PC-9 (cell line): ENCODE measurements at regions of chr15 and their contacts with region 1.

Region 1: GRCh38 chr15:52031566-52031965 is 12.5 kb downstream of the MAPK6 start:
- DNase-seq: peak; percentile 55 to 59
- H3K4me3 ChIP-seq: no peak overlapping the region
- H3K27ac ChIP-seq: 0 out of 2 replicates have a peak overlapping the region, but pooled peaks have one; percentile 39
- H3K4me1 ChIP-seq: peaks cover 10% of the 10 kb centered on the region; the same call in 1 of the 2 replicates
- H3K27me3 ChIP-seq: no peaks in the 10 kb centered on the region
- CTCF ChIP-seq: no peak

Region 2: DNA sequence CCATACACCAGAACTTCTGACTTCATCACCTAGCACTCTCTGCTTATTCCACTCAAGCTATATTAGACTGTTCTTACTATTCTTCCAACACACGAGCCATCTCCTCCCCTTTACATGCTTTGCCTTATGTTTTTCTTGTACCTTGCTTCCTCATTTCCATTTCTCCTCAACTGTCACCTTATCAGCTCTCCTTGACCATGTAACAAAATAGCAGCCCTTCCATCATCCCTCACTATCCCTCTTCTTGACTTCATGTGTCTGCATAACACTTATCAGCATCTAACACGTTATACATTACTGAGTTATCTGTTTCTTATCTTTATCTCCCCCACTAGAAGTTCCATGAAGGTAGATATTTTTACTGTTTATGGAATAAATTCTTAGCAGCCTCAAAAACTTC is 1390.3 kb before region 1 on chr15:
- CTCF ChIA-PET with region 1: no interaction called
- POLR2A ChIA-PET with region 1: interaction called, 10 read pairs
- intact Hi-C with region 1: no loop called
- DNase-seq: no peak
- H3K4me3 ChIP-seq: no peak overlapping the region
- H3K27ac ChIP-seq: no peak overlapping the region
- H3K4me1 ChIP-seq: no peaks in the 10 kb centered on the region
- H3K27me3 ChIP-seq: no peaks in the 10 kb centered on the region
- CTCF ChIP-seq: no peak

Region 3: DNA sequence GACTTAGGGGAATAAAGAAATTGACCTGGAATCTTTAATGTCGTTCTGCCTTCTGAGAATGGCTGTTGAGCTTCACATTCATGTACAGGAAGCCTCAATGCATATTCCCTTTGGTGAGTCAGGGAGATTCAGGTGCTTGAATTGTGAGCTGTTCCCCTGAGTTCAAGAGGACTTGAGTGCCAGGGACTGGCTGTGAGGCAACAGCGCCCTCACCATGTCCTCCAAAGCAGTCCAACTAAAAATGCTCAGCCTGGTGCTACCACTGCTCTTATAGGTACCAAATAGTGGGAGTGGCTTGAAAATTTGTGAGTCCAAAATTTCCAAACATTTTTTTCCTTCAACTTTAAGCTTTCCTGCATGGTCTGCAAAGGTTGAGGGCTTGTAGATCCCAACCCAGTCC is 114.1 kb before region 1 on chr15:
- CTCF ChIA-PET with region 1: no interaction called
- POLR2A ChIA-PET with region 1: no interaction called
- intact Hi-C with region 1: no loop called
- DNase-seq: peak; percentile 36 to 58
- H3K4me3 ChIP-seq: no peak overlapping the region
- H3K27ac ChIP-seq: no peak overlapping the region
- H3K4me1 ChIP-seq: no peaks in the 10 kb centered on the region
- H3K27me3 ChIP-seq: no peaks in the 10 kb centered on the region
- CTCF ChIP-seq: peak; percentile 50; the same call in 1 of the 2 replicates

Region 4: GRCh38 chr15:51955504-51956101 is 76.0 kb before region 1 on chr15:
- CTCF ChIA-PET with region 1: interaction called, 10 read pairs
- POLR2A ChIA-PET with region 1: no interaction called
- intact Hi-C with region 1: no loop called
- DNase-seq: no peak
- H3K4me3 ChIP-seq: no peak overlapping the region
- H3K27ac ChIP-seq: no peak overlapping the region
- H3K4me1 ChIP-seq: no peaks in the 10 kb centered on the region
- H3K27me3 ChIP-seq: no peaks in the 10 kb centered on the region
- CTCF ChIP-seq: no peak